ENCODE measurements at regions of chr15 and their contacts with region 1.

Region 1: DNA sequence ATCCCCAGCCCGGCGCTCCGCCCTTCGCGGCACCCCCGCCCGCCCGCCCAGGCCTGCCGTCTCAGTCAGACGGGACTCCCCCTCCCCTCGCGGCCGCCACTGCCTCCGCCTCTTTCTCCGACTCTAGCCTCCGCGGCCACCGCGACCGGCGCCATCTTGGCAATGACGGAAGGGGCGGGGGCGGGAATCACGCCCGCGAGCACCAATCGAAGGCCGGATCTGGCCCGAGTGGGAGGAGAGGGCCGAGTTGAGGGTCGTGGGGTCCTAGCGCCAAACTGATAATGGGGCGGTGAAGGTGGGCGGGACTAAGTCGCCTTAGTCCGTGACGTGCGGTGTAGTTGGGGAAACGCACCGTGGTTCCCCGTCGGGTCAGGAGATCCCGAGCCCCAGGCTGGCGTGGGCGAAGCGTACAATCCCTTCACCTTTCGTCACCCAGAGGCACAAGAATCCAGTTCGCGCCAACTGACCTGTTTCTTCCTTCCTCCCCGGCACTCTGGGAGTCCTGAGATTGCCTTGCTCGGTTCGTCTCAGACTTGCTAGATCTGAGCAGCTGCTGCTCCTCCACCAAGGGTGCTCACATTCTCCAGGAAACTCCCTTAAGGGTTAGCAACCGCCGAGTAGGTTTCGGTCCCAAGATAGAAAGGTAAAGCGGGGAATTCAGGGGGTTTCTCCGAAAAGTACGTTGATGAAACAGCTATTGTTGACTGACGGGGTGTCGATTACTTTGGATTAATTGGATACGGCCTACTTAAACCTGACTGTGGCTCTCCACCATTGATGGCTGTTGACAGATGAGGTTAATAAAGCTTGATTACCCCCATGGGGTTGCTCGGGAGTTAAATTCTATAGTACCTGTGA is at the start of gene DENND4A:
- DNase-seq: peak; percentile 99
- H3K4me3 Mint-ChIP-seq: peak within 1 kb of the TSS; percentile 91
- H3K27ac Mint-ChIP-seq: peak within 1 kb of the TSS; percentile 99
- H3K4me1 Mint-ChIP-seq: peaks cover 70% of the 10 kb centered on the region
- H3K27me3 Mint-ChIP-seq: no peaks in the 10 kb centered on the region
- total RNA-seq, gene DENND4A: 50.8 and 59.0 TPM in 2 replicates

Region 2: GRCh38 chr15:65530314-65531122 is 261.8 kb before region 1 on chr15 and contains the start of gene HACD3:
- intact Hi-C with region 1: loop called (anchors 2 kb)
- DNase-seq: peak; percentile 86
- H3K4me3 Mint-ChIP-seq: peak within 1 kb of the TSS; percentile 89
- H3K27ac Mint-ChIP-seq: peak within 1 kb of the TSS; percentile 83
- H3K4me1 Mint-ChIP-seq: peaks cover 39% of the 10 kb centered on the region
- H3K27me3 Mint-ChIP-seq: peaks cover 2% of the 10 kb centered on the region
- total RNA-seq, gene HACD3: 45.8 and 46.0 TPM in 2 replicates

Region 3: GRCh38 chr15:65773386-65774111 is 18.8 kb before region 1 on chr15:
- intact Hi-C with region 1: loop called (anchors 1 kb)
- DNase-seq: no peak
- H3K4me3 Mint-ChIP-seq: peak overlapping the region; percentile 15
- H3K27ac Mint-ChIP-seq: peak overlapping the region; percentile 74
- H3K4me1 Mint-ChIP-seq: peaks cover 40% of the 10 kb centered on the region
- H3K27me3 Mint-ChIP-seq: no peaks in the 10 kb centered on the region

Region 4: GRCh38 chr15:65818927-65819562 is 26.7 kb after region 1 on chr15:
- intact Hi-C with region 1: loop called (anchors 1 kb)
- DNase-seq: peak; percentile 25
- H3K4me3 Mint-ChIP-seq: peak overlapping the region; percentile 31
- H3K27ac Mint-ChIP-seq: peak overlapping the region; percentile 91
- H3K4me1 Mint-ChIP-seq: peaks cover 57% of the 10 kb centered on the region
- H3K27me3 Mint-ChIP-seq: no peaks in the 10 kb centered on the region

Region 5: DNA sequence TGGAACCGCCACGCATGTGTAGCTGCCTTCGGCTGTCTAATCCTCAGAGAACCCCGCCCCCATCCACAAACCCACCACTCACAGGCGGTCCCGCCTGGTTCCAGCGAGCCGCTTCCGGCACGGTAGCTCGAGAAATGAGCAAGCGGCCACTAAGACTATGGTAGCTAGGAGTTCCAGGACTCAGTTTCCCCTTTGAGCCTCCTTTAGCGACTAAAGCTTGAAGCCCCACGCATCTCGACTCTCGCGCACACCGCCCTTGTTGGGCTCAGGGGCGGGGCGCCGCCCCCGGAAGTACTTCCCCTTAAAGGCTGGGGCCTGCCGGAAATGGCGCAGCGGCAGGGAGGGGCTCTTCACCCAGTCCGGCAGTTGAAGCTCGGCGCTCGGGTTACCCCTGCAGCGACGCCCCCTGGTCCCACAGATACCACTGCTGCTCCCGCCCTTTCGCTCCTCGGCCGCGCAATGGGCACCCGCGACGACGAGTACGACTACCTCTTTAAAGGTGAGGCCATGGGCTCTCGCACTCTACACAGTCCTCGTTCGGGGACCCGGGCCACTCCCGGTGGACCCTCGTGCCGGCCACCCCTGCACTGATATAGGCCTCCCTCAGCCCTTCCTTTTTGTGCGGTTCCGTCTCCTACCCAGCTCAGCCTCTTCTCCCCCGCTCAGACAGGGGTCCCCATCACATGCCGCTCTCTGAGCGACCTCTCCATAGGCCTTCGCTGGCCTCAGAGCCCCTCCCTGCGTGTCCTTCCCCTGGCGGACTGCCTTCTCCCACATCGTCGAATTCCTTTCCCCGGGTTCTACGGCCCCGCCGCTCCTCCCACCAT is 77.0 kb after region 1 on chr15 and contains the start of gene RAB11A:
- intact Hi-C with region 1: loop called (anchors 1 kb)
- DNase-seq: peak; percentile 94
- H3K4me3 Mint-ChIP-seq: peak within 1 kb of the TSS; percentile 99
- H3K27ac Mint-ChIP-seq: peak within 1 kb of the TSS; percentile 93
- H3K4me1 Mint-ChIP-seq: peaks cover 31% of the 10 kb centered on the region
- H3K27me3 Mint-ChIP-seq: peaks cover 4% of the 10 kb centered on the region
- total RNA-seq, gene RAB11A: 161 and 171 TPM in 2 replicates

Region 6: DNA sequence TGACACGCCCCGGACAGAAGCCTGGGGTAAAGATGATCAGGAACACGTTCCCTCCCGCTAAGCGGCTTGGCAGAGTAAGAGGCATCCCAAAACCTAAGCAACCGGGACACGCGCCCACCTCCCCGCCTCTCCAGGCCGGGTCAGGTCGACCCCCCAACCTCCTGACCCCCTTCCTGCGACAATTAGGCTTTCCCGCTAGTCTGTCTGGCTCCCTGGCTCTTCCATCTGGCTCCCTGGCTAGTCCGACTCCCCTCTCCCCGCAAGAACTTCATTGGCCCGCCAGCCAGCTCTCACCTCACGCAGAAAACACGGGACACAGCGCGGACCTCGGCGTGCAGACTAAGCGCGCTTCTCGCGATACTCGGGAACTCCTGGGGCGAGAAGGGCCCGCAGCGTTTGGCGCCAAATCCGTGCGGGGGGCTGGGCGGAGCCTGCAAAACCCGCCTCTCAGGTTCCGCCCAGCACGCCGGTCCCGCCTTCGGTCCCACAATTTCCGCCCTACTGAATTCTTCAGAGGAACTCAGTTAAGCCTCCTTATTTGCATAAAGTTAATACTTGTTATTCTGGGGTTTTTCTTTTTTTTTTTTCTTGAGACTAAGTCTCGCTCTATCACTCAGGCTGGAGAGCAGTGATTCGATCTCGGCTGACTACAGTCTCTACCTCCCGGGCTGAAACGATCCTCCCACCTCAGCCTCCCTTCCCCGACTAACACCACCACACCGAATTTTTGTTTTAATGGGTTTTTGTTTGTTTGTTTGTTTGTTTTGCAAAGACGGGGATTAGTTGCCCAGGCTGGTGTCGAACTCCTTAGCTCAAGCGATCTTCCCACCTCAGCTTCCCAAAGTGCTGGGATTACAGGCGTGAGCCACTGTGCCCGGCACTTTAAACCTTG is 564.2 kb after region 1 on chr15 and contains the start of gene TIPIN:
- intact Hi-C with region 1: loop called (anchors 1 kb)
- DNase-seq: peak; percentile 96
- H3K4me3 Mint-ChIP-seq: peak within 1 kb of the TSS; percentile 96
- H3K27ac Mint-ChIP-seq: peak within 1 kb of the TSS; percentile 97
- H3K4me1 Mint-ChIP-seq: peaks cover 35% of the 10 kb centered on the region
- H3K27me3 Mint-ChIP-seq: no peaks in the 10 kb centered on the region
- total RNA-seq, gene TIPIN: 49.2 and 56.0 TPM in 2 replicates